ENCODE measurements at regions of chr19 and their contacts with region 1.

Region 1: GRCh38 chr19:41531438-41532311 is 44.3 kb upstream of the CEACAM21 start:
- DNase-seq: peak; percentile 69 to 92
- ATAC-seq: peak; percentile 92 to 96 (median 96)
- H3K4me3 ChIP-seq: peak overlapping the region in 6 of 10 donors; percentile 17 to 37 (median 26)
- H3K27ac ChIP-seq: peak overlapping the region; percentile 43 to 94 (median 78)
- H3K4me1 ChIP-seq: peaks cover 0 to 65% (median 16%) of the 10 kb centered on the region in 9 donors
- H3K27me3 ChIP-seq: peaks cover 0 to 5% (median 2%) of the 10 kb centered on the region in 7 donors
- CTCF ChIP-seq: no peak

Region 2: DNA sequence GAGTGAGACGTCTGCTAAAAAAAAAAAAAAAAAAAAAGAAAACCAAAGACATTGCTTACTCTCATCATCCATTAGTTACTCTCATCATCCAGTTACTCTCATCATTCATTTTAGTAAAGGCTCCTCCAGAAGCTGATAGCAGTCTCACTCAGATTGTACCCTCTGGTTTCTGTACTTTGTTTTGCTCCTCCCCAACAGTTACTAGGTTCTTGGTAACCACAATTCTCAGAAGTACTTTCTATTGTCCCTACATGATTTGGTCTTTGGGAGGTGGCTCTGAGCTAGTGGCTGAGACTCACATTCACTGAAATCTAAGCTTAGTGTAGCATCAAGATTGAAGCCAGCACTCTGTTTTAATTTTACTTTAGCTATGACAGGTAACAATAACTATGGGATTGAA is 74.4 kb before region 1 on chr19:
- intact Hi-C with region 1: loop called in 1 of 10 experiments (anchors 5 kb)
- DNase-seq: no peak
- ATAC-seq: peak in 5 of 8 donors; percentile 29 to 73 (median 41)
- H3K4me3 ChIP-seq: peak overlapping the region in 1 of 10 donors; percentile 8
- H3K27ac ChIP-seq: peak overlapping the region in 9 of 10 donors; percentile 4 to 77 (median 67)
- H3K4me1 ChIP-seq: peaks cover 0 to 32% (median 23%) of the 10 kb centered on the region in 9 donors
- H3K27me3 ChIP-seq: peaks cover 0 to 35% (median 7%) of the 10 kb centered on the region in 7 donors
- CTCF ChIP-seq: no peak